ENCODE measurements at regions of chr17 and their contacts with region 1.

Region 1: DNA sequence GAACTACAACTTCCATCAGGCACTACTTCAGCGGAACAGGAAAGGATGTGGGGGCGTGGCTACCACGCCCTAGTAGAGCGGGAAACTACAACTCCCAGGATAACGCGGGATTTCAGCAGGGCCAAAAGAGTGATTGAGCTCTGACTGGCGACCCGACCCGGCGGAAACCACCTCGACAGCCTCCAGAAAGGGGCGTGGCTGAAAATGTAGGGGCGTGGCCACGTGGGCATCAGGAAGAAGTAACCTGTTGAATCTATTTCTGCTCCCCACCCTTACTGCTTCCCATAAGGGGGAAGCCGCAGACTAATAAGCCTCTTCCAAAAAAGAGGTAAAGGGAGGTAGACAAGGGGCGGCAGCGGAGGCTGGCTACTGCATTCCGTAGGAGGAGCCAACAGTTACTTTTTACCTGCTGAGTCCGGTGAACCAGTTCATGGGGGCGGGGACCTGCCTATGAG is at the start of gene TMEM102:
- DNase-seq: peak; percentile 97
- H3K4me3 ChIP-seq: peak within 1 kb of the TSS; percentile 54 to 83 (median 83)
- H3K27ac ChIP-seq: peak within 1 kb of the TSS; percentile 32
- H3K4me1 ChIP-seq: peaks cover 21% of the 10 kb centered on the region
- H3K27me3 ChIP-seq: peaks cover 18 to 21% of the 10 kb centered on the region in 2 experiments
- CTCF ChIP-seq: no peak
- POLR2A ChIP-seq: no peak
- total RNA-seq, gene TMEM102: 6.1 and 6.5 TPM in 2 replicates

Region 2: DNA sequence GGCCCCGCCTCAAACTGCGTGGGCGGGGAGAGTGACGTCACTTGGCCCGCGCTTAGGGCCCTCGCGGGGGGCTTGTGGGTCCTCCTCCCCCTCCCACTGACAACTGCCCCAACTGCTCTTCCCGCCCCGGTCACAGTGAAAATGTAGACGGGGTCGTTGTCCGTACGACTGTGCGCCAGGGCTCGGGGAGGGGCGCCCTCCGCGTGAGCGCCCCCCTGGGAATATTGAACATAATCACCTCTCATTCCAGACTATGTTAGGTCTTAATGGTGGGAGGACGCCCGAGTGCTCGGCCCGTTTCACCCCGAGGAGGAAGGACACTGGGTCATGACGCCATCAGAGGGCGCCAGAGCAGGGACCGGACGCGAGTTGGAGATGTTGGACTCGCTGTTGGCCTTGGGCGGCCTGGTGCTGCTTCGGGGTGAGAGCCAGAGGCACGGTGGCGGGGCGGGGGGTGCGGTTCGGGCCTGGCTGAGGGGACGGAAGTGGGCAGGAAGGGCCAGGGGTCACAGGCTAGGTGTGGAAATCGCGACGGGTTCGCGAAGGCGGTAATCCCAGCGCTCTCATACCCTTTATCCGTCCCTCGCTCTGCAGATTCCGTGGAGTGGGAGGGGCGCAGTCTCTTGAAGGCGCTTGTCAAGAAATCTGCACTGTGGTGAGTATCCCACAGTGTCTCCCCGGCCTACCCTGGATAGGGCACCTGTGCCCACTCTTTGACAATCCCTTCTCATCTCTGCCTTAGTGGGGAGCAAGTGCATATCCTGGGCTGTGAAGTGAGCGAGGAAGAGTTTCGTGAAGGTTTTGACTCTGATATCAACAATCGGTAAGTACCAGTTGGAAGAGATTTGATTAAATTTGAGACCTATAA is 182.8 kb before region 1 on chr17 and contains the start of gene ELP5:
- CTCF ChIA-PET with region 1: no interaction called
- POLR2A ChIA-PET with region 1: no interaction called
- dilution Hi-C with region 1: no loop called
- intact Hi-C with region 1: loop called (anchors 5 kb)
- DNase-seq: peak; percentile 99
- H3K4me3 ChIP-seq: peak within 1 kb of the TSS; percentile 57 to 87 (median 83)
- H3K27ac ChIP-seq: peak within 1 kb of the TSS; percentile 95
- H3K4me1 ChIP-seq: peaks cover 23% of the 10 kb centered on the region
- H3K27me3 ChIP-seq: no peaks in the 10 kb centered on the region
- CTCF ChIP-seq: peak in 1 of 2 donors; percentile 10
- POLR2A ChIP-seq: peak; percentile 49
- total RNA-seq, gene ELP5: 41.6 and 44.4 TPM in 2 replicates

Region 3: GRCh38 chr17:7351665-7352501 is 83.4 kb before region 1 on chr17 and contains the start of gene KCTD11:
- CTCF ChIA-PET with region 1: interaction called, 70 read pairs
- POLR2A ChIA-PET with region 1: no interaction called
- dilution Hi-C with region 1: no loop called
- intact Hi-C with region 1: loop called (anchors 1 kb)
- DNase-seq: peak; percentile 76
- H3K4me3 ChIP-seq: peak within 1 kb of the TSS; percentile 54 to 78 (median 70)
- H3K27ac ChIP-seq: peak within 1 kb of the TSS; percentile 78
- H3K4me1 ChIP-seq: peaks cover 17% of the 10 kb centered on the region
- H3K27me3 ChIP-seq: no peaks in the 10 kb centered on the region
- CTCF ChIP-seq: peak in 1 of 2 donors; percentile 69
- POLR2A ChIP-seq: peak; percentile 57
- total RNA-seq, gene KCTD11: 3.5 and 3.8 TPM in 2 replicates

Region 4: GRCh38 chr17:7403977-7404736 is 31.1 kb before region 1 on chr17 and contains the start of gene TMEM256:
- CTCF ChIA-PET with region 1: interaction called, 40 read pairs
- POLR2A ChIA-PET with region 1: interaction called, 7 read pairs
- dilution Hi-C with region 1: no loop called
- intact Hi-C with region 1: loop called (anchors 1 kb)
- DNase-seq: peak; percentile 99
- H3K4me3 ChIP-seq: peak within 1 kb of the TSS; percentile 43 to 61 (median 52)
- H3K27ac ChIP-seq: peak within 1 kb of the TSS; percentile 21
- H3K4me1 ChIP-seq: peaks cover 12% of the 10 kb centered on the region
- H3K27me3 ChIP-seq: no peaks in the 10 kb centered on the region
- CTCF ChIP-seq: peak in 1 of 2 donors; percentile 2
- POLR2A ChIP-seq: peak; percentile 93
- total RNA-seq, gene TMEM256: 57.3 and 67.4 TPM in 2 replicates

Region 5: GRCh38 chr17:7460850-7461660 is 25.8 kb after region 1 on chr17:
- CTCF ChIA-PET with region 1: interaction called, 11 read pairs
- POLR2A ChIA-PET with region 1: interaction called, 10 read pairs
- dilution Hi-C with region 1: no loop called
- intact Hi-C with region 1: no loop called
- DNase-seq: no peak
- H3K4me3 ChIP-seq: no peak overlapping the region
- H3K27ac ChIP-seq: no peak overlapping the region
- H3K4me1 ChIP-seq: no peaks in the 10 kb centered on the region
- H3K27me3 ChIP-seq: no peaks in the 10 kb centered on the region
- CTCF ChIP-seq: no peak
- POLR2A ChIP-seq: no peak

Region 6: GRCh38 chr17:7478276-7479153 is 43.3 kb after region 1 on chr17:
- CTCF ChIA-PET with region 1: interaction called, 21 read pairs
- POLR2A ChIA-PET with region 1: interaction called, 8 read pairs
- dilution Hi-C with region 1: no loop called
- intact Hi-C with region 1: no loop called
- DNase-seq: peak; percentile 35
- H3K4me3 ChIP-seq: peak overlapping the region; percentile 49 to 91 (median 71)
- H3K27ac ChIP-seq: peak overlapping the region; percentile 58
- H3K4me1 ChIP-seq: peaks cover 38% of the 10 kb centered on the region
- H3K27me3 ChIP-seq: no peaks in the 10 kb centered on the region
- CTCF ChIP-seq: no peak
- POLR2A ChIP-seq: no peak

Region 7: DNA sequence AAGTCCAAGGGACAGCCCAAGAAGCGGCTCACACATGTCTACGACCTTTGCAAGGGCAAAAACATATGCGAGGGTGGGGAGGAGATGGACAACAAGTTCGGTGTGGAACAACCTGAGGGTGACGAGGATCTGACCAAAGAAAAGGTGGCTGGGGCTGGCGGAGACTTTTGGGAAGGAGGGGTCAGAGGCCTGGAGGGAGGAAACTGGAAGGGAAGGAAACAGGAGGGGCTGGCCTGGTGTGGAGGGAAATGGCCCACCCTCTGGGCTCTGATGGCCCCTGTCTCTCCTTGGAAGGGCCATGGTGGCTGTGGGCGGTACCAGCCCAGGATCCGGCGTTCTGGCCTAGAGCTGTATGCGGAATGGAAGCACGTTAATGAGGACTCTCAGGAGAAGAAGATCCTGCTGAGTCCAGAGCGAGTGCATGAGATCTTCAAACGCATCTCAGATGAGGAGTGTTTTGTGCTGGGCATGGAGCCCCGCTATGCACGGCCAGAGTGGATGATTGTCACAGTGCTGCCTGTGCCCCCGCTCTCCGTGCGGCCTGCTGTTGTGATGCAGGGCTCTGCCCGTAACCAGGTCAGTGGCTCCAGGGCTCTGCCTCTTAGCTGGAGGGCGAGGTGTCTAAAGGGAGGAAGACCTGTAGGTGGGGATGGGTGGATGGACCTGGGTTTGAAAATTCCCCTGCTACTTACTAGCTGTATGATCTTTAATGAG is 61.4 kb after region 1 on chr17:
- CTCF ChIA-PET with region 1: interaction called, 25 read pairs
- POLR2A ChIA-PET with region 1: no interaction called
- dilution Hi-C with region 1: no loop called
- intact Hi-C with region 1: no loop called
- DNase-seq: peak; percentile 19
- H3K4me3 ChIP-seq: no peak overlapping the region
- H3K27ac ChIP-seq: peak overlapping the region; percentile 51
- H3K4me1 ChIP-seq: peaks cover 23% of the 10 kb centered on the region
- H3K27me3 ChIP-seq: no peaks in the 10 kb centered on the region
- CTCF ChIP-seq: no peak
- POLR2A ChIP-seq: no peak

Region 8: DNA sequence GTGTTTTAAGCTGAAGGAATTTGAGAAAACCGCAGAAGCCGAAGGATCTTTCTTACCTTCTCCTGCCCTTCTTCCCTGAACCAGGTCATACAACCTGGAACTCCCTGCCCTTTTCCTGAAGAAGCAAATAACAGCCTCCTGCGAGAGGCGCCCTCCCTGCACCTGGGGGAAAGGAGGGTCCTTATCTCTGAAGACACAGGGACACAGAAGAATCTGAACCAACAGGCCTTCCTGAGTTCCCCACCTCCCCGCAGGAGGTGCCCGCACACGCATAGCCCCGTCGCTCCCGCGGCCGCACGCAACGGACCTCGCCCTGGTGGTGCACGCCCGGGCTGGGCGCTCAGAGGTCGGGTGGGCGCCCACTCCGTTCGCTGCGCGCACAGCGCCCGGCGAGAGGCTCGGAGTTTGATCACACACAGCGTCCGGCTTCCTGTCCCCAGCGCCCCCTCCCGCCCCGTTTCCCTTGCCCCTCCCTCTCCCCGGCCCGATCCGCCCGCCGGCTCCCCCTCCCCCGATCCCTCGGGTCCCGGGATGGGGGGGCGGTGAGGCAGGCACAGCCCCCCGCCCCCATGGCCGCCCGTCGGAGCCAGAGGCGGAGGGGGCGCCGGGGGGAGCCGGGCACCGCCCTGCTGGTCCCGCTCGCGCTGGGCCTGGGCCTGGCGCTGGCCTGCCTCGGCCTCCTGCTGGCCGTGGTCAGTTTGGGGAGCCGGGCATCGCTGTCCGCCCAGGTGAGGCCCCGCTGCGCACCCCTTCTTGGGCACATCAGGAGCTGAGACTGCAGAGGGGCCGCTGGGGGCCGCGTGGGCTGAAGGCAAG is 113.5 kb after region 1 on chr17 and contains the start of gene TNFSF12:
- CTCF ChIA-PET with region 1: no interaction called
- POLR2A ChIA-PET with region 1: no interaction called
- dilution Hi-C with region 1: no loop called
- intact Hi-C with region 1: no loop called
- DNase-seq: peak; percentile 40
- H3K4me3 ChIP-seq: peak within 1 kb of the TSS; percentile 24 to 60 (median 40)
- H3K27ac ChIP-seq: no peak within 1 kb of the TSS
- H3K4me1 ChIP-seq: peaks cover 10% of the 10 kb centered on the region
- H3K27me3 ChIP-seq: no peaks in the 10 kb centered on the region
- CTCF ChIP-seq: peak in 1 of 2 donors; percentile 31
- POLR2A ChIP-seq: peak; percentile 72
- total RNA-seq, gene TNFSF12: 21.0 and 28.4 TPM in 2 replicates